Ascending aorta (tissue), 2 donors: ENCODE measurements at regions of chr16 and their contacts with region 1.

Region 1: GRCh38 chr16:67935402-67936123 is 1.1 kb downstream of the PSMB10 start:
- DNase-seq: peak; percentile 88 to 96
- H3K4me3 ChIP-seq: peak overlapping the region; percentile 65 to 85
- H3K27ac ChIP-seq: peak overlapping the region; percentile 88 to 92
- H3K4me1 ChIP-seq: peaks cover 7 to 16% of the 10 kb centered on the region in 2 donors
- H3K27me3 ChIP-seq: no peaks in the 10 kb centered on the region
- CTCF ChIP-seq: peak in 1 of 3 experiments; percentile 14

Region 2: GRCh38 chr16:67530013-67530939 is 405.3 kb before region 1 on chr16:
- intact Hi-C with region 1: loop called (anchors 5 kb)
- DNase-seq: peak; percentile 69 to 94
- H3K4me3 ChIP-seq: peak overlapping the region; percentile 77 to 97
- H3K27ac ChIP-seq: peak overlapping the region; percentile 93 to 99
- H3K4me1 ChIP-seq: peaks cover 7 to 9% of the 10 kb centered on the region in 2 donors
- H3K27me3 ChIP-seq: no peaks in the 10 kb centered on the region
- CTCF ChIP-seq: no peak

Region 3: DNA sequence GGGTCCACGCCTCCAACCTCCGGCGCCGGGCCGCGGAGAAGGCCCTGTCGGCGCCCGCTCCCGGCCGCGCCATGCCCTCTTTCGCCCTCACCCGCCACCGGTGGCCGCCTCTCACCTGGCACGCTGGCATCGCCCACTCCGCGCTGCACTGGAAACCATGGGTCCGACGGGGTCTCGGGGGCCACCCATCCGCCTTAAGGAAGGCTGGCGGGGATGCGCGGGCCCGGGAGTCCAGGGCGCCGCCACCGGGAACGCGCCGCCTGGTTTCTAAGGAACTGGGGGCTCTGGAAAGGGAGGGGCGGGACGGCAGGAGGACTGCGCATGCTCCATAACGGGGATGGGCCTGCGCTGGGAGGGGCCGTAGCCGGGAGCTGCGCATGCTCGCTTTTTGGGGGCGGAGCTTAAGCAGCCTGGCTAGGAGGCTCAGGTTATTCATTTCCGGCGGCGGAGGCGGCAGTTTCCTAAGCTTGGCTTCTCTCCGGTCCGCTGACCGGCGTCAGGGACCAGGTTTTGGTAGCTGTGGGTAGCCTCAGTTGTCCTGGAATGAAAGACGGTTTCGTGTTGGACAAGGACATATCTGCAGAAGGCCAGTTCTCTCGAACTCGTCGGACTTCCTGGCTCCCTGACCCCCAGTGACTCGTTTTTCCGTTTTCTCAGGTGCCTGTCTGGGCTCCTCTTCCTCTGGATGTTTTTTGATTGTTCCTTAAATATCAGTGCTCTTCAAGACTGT is 216.3 kb before region 1 on chr16 and contains the start of gene GFOD2:
- intact Hi-C with region 1: loop called (anchors 10 kb)
- DNase-seq: peak; percentile 78 to 98
- H3K4me3 ChIP-seq: peak within 1 kb of the TSS; percentile 87 to 99
- H3K27ac ChIP-seq: peak within 1 kb of the TSS; percentile 87 to 94
- H3K4me1 ChIP-seq: peaks cover 0 to 12% of the 10 kb centered on the region in 2 donors
- H3K27me3 ChIP-seq: no peaks in the 10 kb centered on the region
- CTCF ChIP-seq: no peak
- total RNA-seq, gene GFOD2: 43.5 TPM

Region 4: DNA sequence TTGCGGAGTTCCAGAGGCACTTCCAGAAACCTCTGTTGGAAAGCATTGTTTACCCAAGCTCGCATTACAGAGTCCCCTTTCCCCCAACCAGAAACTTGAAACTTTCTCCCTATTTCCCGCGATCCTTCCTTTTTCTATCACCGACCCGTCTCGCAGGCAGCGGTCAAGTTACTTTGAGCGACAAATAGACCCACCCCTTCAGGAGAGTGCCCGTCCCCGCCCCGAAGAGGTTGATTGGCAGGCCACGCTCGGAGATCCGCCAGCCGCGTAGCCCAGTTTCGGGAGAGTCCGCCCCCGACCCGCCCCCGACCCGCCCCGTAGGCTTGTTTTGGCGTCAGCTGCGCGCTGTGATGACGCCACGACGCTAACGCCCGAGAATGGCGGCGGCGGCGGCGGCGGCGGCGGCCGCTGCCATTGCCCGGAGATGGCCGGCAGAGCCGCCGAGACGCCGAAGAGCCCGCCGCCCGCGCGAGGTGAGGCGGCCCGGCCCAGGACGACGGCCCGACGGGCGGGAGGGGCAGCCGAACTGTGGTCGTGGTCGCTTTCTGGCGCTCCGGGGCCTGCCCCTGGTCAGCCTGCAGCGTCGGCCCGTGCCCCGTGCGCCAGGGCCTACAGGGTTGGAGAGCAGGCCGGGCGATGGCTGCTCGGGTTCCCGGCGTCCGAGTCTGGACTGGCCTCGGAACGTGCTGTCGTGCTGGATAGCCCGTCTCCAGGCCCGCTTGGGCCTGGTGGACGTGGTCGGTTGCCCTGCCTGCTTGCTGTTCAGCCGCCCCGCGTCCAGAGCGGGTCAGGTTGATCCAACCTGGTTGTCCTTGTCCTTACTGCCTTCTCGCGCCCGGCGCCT is 42.4 kb before region 1 on chr16 and contains the start of gene PSKH1:
- intact Hi-C with region 1: loop called (anchors 1 kb)
- DNase-seq: peak; percentile 82 to 98
- H3K4me3 ChIP-seq: peak within 1 kb of the TSS; percentile 99 to 100
- H3K27ac ChIP-seq: peak within 1 kb of the TSS; percentile 96 to 99
- H3K4me1 ChIP-seq: peaks cover 19 to 43% of the 10 kb centered on the region in 2 donors
- H3K27me3 ChIP-seq: no peaks in the 10 kb centered on the region
- CTCF ChIP-seq: no peak
- total RNA-seq, gene PSKH1: 41.0 TPM

Region 5: GRCh38 chr16:67954421-67955196 is 19.0 kb after region 1 on chr16:
- intact Hi-C with region 1: no loop called
- DNase-seq: no peak
- H3K4me3 ChIP-seq: no peak overlapping the region
- H3K27ac ChIP-seq: no peak overlapping the region
- H3K4me1 ChIP-seq: peaks cover 0 to 4% of the 10 kb centered on the region in 2 donors
- H3K27me3 ChIP-seq: no peaks in the 10 kb centered on the region
- CTCF ChIP-seq: no peak

Region 6: DNA sequence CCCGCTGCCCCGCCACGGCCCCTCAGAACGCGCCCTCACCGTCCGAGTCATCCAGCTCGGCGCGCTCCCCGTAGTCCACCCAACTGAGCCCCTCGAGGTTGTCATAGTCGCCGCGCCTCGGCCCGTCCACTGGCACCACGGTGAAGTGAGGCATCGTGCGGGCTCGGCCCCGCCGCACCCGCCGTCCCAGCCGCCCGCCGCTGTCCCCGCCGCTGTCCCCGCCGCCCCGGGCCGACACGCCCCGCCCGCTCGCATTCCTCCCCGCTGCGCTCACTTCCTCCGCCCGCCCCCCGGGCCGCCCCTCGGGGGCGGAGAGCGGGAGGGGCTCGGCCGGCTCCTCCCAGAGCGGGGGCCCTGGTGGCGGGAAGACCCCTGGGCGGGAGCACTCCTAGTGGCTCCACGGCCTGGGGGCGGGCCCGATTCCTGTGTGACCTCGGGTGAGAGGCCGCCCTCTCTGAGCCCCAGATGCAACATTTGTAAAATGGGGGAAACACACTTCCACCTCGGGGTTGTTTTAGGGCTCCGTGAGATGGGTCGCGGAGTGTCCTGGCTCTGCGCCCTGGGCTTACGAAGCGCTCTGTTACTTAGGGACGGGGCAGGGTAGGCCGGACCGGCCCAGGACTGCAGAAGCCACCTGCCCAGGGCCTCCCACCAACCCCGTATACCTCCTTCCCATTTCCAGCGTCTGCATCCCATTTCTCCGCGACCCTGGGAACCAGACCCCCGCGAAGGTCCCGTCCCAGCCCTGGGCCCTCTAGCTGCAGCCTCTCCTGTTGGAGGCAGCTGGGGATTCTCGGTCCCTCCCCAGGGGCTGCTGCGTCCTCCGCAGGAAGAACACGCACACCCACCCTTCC is 33.1 kb after region 1 on chr16 and contains the start of gene SLC12A4:
- intact Hi-C with region 1: loop called (anchors 1 kb)
- DNase-seq: peak; percentile 54 to 94
- H3K4me3 ChIP-seq: peak within 1 kb of the TSS; percentile 79 to 83
- H3K27ac ChIP-seq: peak within 1 kb of the TSS; percentile 94 to 98
- H3K4me1 ChIP-seq: peaks cover 11 to 39% of the 10 kb centered on the region in 2 donors
- H3K27me3 ChIP-seq: no peaks in the 10 kb centered on the region
- CTCF ChIP-seq: no peak
- total RNA-seq, gene SLC12A4: 83.2 TPM